RWPE1 (cell line): ENCODE measurements at regions of chr13 and their contacts with region 1.

Region 1: GRCh38 chr13:43258761-43259160 is 235.4 kb downstream of the DNAJC15 start:
- DNase-seq: peak; percentile 16
- H3K27ac ChIP-seq: no peak overlapping the region
- CTCF ChIP-seq: no peak

Region 2: GRCh38 chr13:42218576-42218975 is 1040.2 kb before region 1 on chr13:
- CTCF ChIA-PET with region 1: no interaction called
- POLR2A ChIA-PET with region 1: interaction called, 12 read pairs
- DNase-seq: no peak
- H3K27ac ChIP-seq: peak overlapping the region; percentile 47; the same call in 1 of the 2 replicates
- CTCF ChIP-seq: no peak

Region 3: GRCh38 chr13:43597599-43597945 is 338.8 kb after region 1 on chr13:
- CTCF ChIA-PET with region 1: no interaction called
- POLR2A ChIA-PET with region 1: no interaction called
- DNase-seq: no peak
- H3K27ac ChIP-seq: no peak overlapping the region
- CTCF ChIP-seq: no peak